Activated B cell treated with CpG ODN at 0.5 μM for 24 hours (primary cell): ENCODE measurements at regions of chr11 and their contacts with region 1.

Region 1: GRCh38 chr11:17384002-17384511 is 4.4 kb downstream of the KCNJ11 start:
- DNase-seq: peak; percentile 65
- ATAC-seq: peak; percentile 66
- H3K4me3 Mint-ChIP-seq: no peak overlapping the region
- H3K27ac Mint-ChIP-seq: no peak overlapping the region
- H3K4me1 Mint-ChIP-seq: peaks cover 3% of the 10 kb centered on the region
- H3K27me3 Mint-ChIP-seq: no peaks in the 10 kb centered on the region
- CTCF ChIP-seq: peak; percentile 69

Region 2: DNA sequence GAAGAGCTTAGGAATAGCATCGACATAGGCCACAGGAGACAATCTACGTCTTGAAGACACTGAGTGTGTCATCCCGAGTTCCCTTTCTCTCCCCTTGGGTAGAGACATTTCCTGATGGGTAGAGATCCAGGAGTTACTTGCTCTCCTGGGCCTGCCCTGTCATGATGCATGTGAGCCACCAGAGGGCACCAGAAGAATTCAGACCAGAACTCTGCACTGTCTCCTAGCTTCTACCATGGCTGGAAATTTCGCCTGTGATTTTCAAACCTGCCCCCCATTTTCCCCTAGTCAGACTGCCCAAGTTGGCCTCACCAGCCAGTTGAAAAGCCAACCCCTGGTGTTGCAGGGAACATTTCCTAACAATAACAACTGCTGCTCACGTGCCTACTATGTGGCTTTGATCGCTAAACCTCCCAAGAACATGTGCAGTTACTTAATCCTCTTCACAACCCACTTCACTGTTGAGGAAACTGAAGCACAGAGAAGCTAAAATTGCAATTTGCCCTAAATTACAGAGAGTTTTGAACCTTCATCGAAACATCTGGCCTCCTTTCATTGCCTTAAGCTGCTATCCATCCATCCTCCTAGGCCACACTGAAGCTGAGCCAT is 598.4 kb before region 1 on chr11:
- CTCF ChIA-PET with region 1: interaction called, 3 read pairs
- POLR2A ChIA-PET with region 1: no interaction called
- intact Hi-C with region 1: loop called (anchors 10 kb)
- DNase-seq: no peak
- ATAC-seq: peak; percentile 85
- H3K4me3 Mint-ChIP-seq: no peak overlapping the region
- H3K27ac Mint-ChIP-seq: no peak overlapping the region
- H3K4me1 Mint-ChIP-seq: no peaks in the 10 kb centered on the region
- H3K27me3 Mint-ChIP-seq: no peaks in the 10 kb centered on the region
- CTCF ChIP-seq: peak; percentile 16

Region 3: GRCh38 chr11:17230867-17231851 is 152.9 kb before region 1 on chr11:
- CTCF ChIA-PET with region 1: interaction called, 8 read pairs
- POLR2A ChIA-PET with region 1: no interaction called
- intact Hi-C with region 1: loop called (anchors 2 kb)
- DNase-seq: no peak
- ATAC-seq: peak; percentile 78
- H3K4me3 Mint-ChIP-seq: peak overlapping the region; percentile 29
- H3K27ac Mint-ChIP-seq: peak overlapping the region; percentile 11
- H3K4me1 Mint-ChIP-seq: peaks cover 16% of the 10 kb centered on the region
- H3K27me3 Mint-ChIP-seq: no peaks in the 10 kb centered on the region
- CTCF ChIP-seq: no peak

Region 4: GRCh38 chr11:17428925-17429324 is 44.9 kb after region 1 on chr11:
- CTCF ChIA-PET with region 1: no interaction called
- POLR2A ChIA-PET with region 1: no interaction called
- intact Hi-C with region 1: no loop called
- DNase-seq: no peak
- ATAC-seq: no peak
- H3K4me3 Mint-ChIP-seq: no peak overlapping the region
- H3K27ac Mint-ChIP-seq: no peak overlapping the region
- H3K4me1 Mint-ChIP-seq: no peaks in the 10 kb centered on the region
- H3K27me3 Mint-ChIP-seq: peaks cover 8% of the 10 kb centered on the region
- CTCF ChIP-seq: no peak

Region 5: GRCh38 chr11:17504330-17505107 is 120.5 kb after region 1 on chr11:
- CTCF ChIA-PET with region 1: interaction called, 34 read pairs
- POLR2A ChIA-PET with region 1: no interaction called
- intact Hi-C with region 1: loop called (anchors 1 kb)
- DNase-seq: peak; percentile 57
- ATAC-seq: peak; percentile 66
- H3K4me3 Mint-ChIP-seq: no peak overlapping the region
- H3K27ac Mint-ChIP-seq: no peak overlapping the region
- H3K4me1 Mint-ChIP-seq: no peaks in the 10 kb centered on the region
- H3K27me3 Mint-ChIP-seq: peaks cover 5% of the 10 kb centered on the region
- CTCF ChIP-seq: no peak

Region 6: DNA sequence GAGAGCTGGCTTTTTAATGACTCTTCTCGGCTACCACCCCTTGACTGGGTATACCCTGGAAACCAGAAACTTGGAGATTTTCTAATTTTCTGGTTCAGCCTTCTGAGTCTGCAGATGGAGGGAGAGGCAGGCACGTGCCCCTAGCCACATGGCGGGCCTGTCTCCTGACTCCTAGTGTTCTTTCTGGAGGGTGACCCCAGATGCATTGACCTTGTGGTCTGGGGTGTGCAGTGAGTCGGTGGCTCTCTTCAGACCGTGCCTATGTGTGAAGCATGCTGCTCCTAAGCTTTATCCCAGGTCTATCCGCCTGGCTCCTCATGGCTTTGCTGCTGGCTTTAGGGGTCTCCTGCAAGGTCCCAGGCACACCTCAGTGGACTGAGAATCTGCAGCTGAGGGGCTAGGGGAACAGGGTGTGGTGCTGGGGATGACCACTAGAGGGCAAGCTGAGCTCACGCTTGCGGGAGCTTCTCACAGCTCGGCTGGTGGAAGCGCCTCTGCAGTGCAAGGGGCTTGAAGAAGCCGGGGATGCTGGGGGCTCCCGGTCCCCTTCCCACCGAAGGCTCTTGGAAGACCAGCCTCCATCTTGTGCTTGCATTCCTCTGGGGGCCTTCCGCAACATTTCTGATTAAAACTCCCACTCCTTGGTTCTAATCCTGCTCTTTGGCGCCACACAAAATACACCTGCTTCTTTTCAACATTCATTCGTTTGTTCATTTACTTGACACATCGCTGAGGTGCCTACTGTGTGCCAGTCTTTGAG is 214.8 kb after region 1 on chr11:
- CTCF ChIA-PET with region 1: no interaction called
- POLR2A ChIA-PET with region 1: no interaction called
- intact Hi-C with region 1: loop called (anchors 1 kb)
- DNase-seq: peak; percentile 54
- ATAC-seq: peak; percentile 83
- H3K4me3 Mint-ChIP-seq: no peak overlapping the region
- H3K27ac Mint-ChIP-seq: no peak overlapping the region
- H3K4me1 Mint-ChIP-seq: no peaks in the 10 kb centered on the region
- H3K27me3 Mint-ChIP-seq: no peaks in the 10 kb centered on the region
- CTCF ChIP-seq: peak; percentile 32

Region 7: GRCh38 chr11:17722000-17722643 is 338.1 kb after region 1 on chr11:
- CTCF ChIA-PET with region 1: no interaction called
- POLR2A ChIA-PET with region 1: no interaction called
- intact Hi-C with region 1: no loop called
- DNase-seq: no peak
- ATAC-seq: no peak
- H3K4me3 Mint-ChIP-seq: no peak overlapping the region
- H3K27ac Mint-ChIP-seq: no peak overlapping the region
- H3K4me1 Mint-ChIP-seq: no peaks in the 10 kb centered on the region
- H3K27me3 Mint-ChIP-seq: peaks cover 33% of the 10 kb centered on the region
- CTCF ChIP-seq: no peak